CD8-positive, alpha-beta T cell (primary cell): ENCODE measurements at regions of chr3 and their contacts with region 1.

Region 1: GRCh38 chr3:4512895-4513616 is 19.9 kb downstream of the ITPR1 start:
- DNase-seq: peak in 1 of 9 experiments; percentile 27
- ATAC-seq: peak; percentile 62
- H3K4me3 ChIP-seq: no peak overlapping the region
- H3K4me3 Mint-ChIP-seq: no peak overlapping the region
- H3K27ac ChIP-seq: no peak overlapping the region
- H3K27ac Mint-ChIP-seq: peak overlapping the region; percentile 14
- H3K4me1 ChIP-seq: peaks cover 24% of the 10 kb centered on the region
- H3K4me1 Mint-ChIP-seq: peaks cover 56% of the 10 kb centered on the region
- H3K27me3 ChIP-seq: no peaks in the 10 kb centered on the region
- H3K27me3 Mint-ChIP-seq: no peaks in the 10 kb centered on the region
- CTCF ChIP-seq: no peak

Region 2: DNA sequence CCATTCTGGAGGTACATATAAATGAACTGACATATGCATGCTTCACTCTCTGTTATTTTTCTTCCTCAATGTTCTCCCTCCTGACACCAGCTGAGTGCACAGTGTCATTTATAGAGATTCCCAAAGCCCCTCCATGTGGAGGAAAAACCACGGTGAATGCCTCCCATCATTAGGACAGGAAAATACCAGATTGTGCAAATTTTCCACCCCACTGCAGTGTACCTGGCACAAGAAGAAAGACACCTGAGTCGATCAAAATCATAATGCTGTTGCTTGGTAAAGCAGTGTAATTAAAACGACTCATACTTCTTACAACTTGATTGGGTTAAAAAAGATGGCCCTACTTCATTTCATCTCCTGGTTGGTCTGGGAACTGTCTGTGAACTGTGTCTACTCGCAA is 1693.5 kb before region 1 on chr3:
- CTCF ChIA-PET with region 1: no interaction called
- POLR2A ChIA-PET with region 1: no interaction called
- intact Hi-C with region 1: no loop called
- DNase-seq: no peak
- ATAC-seq: no peak
- H3K4me3 ChIP-seq: no peak overlapping the region
- H3K4me3 Mint-ChIP-seq: no peak overlapping the region
- H3K27ac ChIP-seq: no peak overlapping the region
- H3K27ac Mint-ChIP-seq: no peak overlapping the region
- H3K4me1 ChIP-seq: no peaks in the 10 kb centered on the region
- H3K4me1 Mint-ChIP-seq: no peaks in the 10 kb centered on the region
- H3K27me3 ChIP-seq: no peaks in the 10 kb centered on the region
- H3K27me3 Mint-ChIP-seq: no peaks in the 10 kb centered on the region
- CTCF ChIP-seq: no peak

Region 3: GRCh38 chr3:4571690-4572334 is 58.8 kb after region 1 on chr3:
- CTCF ChIA-PET with region 1: interaction called, 4 read pairs
- POLR2A ChIA-PET with region 1: no interaction called
- intact Hi-C with region 1: loop called (anchors 2 to 5 kb)
- DNase-seq: peak in 2 of 9 experiments; percentile 32 to 48
- ATAC-seq: peak; percentile 52
- H3K4me3 ChIP-seq: no peak overlapping the region
- H3K4me3 Mint-ChIP-seq: no peak overlapping the region
- H3K27ac ChIP-seq: no peak overlapping the region
- H3K27ac Mint-ChIP-seq: no peak overlapping the region
- H3K4me1 ChIP-seq: no peaks in the 10 kb centered on the region
- H3K4me1 Mint-ChIP-seq: peaks cover 17% of the 10 kb centered on the region
- H3K27me3 ChIP-seq: no peaks in the 10 kb centered on the region
- H3K27me3 Mint-ChIP-seq: no peaks in the 10 kb centered on the region
- CTCF ChIP-seq: no peak